ENCODE measurements at regions of chr1 and their contacts with region 1.

Region 1: GRCh38 chr1:6554031-6554906 is at the start of gene NOL9:
- DNase-seq: peak; percentile 95
- H3K4me3 ChIP-seq: peak within 1 kb of the TSS; percentile 99
- H3K27ac ChIP-seq: peak within 1 kb of the TSS; percentile 56
- H3K4me1 ChIP-seq: peaks cover 18% of the 10 kb centered on the region
- CTCF ChIP-seq: peak; percentile 91
- total RNA-seq, gene NOL9: 30.7 and 39.1 TPM in 2 replicates

Region 2: DNA sequence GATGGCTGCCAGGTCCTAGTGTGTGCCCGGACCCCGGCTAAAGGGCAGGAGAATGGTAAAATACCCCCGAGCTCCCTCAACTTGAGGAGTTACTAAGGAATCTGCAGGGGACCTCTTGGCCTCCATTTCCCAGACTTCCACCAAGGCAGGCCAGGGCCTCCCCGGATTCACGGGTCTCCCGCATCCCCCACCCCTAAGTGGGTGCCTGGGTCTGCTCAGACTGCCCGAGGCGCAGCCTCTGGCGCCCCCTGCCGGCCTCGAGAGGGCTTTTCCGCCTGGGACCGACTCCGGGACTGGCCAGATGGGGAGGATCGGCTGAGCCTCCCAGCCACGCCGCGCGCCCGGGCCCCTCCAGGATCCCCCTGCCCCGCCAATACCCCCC is 64.5 kb before region 1 on chr1:
- CTCF ChIA-PET with region 1: no interaction called
- POLR2A ChIA-PET with region 1: interaction called, 4 read pairs
- intact Hi-C with region 1: loop called (anchors 2 kb)
- DNase-seq: peak; percentile 88
- H3K4me3 ChIP-seq: peak overlapping the region; percentile 77
- H3K27ac ChIP-seq: peak overlapping the region; percentile 56
- H3K4me1 ChIP-seq: peaks cover 14% of the 10 kb centered on the region
- CTCF ChIP-seq: peak; percentile 95

Region 3: DNA sequence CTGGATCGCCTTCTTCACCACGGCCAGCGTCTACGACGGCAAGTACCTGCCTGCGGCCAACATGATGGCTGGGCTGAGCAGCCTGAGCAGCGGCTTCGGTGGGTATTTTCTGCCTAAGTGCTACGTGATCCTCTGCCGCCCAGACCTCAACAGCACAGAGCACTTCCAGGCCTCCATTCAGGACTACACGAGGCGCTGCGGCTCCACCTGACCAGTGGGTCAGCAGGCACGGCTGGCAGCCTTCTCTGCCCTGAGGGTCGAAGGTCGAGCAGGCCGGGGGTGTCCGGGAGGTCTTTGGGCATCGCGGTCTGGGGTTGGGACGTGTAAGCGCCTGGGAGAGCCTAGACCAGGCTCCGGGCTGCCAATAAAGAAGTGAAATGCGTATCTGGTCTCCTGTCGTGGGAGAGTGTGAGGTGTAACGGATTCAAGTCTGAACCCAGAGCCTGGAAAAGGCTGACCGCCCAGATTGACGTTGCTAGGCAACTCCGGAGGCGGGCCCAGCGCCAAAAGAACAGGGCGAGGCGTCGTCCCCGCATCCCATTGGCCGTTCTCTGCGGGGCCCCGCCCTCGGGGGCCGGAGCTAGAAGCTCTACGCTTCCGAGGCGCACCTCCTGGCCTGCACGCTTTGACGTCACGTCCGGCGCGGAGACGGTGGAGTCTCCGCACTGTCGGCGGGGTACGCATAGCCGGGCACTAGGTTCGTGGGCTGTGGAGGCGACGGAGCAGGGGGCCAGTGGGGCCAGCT is 25.3 kb after region 1 on chr1 and contains the start of gene ZBTB48:
- CTCF ChIA-PET with region 1: interaction called, 7 read pairs
- POLR2A ChIA-PET with region 1: interaction called, 4 read pairs
- intact Hi-C with region 1: loop called (anchors 1 kb)
- DNase-seq: peak; percentile 98
- H3K4me3 ChIP-seq: peak within 1 kb of the TSS; percentile 86
- H3K27ac ChIP-seq: peak within 1 kb of the TSS; percentile 38
- H3K4me1 ChIP-seq: peaks cover 29% of the 10 kb centered on the region
- CTCF ChIP-seq: no peak
- total RNA-seq, gene ZBTB48: 28.9 and 41.9 TPM in 2 replicates

Region 4: DNA sequence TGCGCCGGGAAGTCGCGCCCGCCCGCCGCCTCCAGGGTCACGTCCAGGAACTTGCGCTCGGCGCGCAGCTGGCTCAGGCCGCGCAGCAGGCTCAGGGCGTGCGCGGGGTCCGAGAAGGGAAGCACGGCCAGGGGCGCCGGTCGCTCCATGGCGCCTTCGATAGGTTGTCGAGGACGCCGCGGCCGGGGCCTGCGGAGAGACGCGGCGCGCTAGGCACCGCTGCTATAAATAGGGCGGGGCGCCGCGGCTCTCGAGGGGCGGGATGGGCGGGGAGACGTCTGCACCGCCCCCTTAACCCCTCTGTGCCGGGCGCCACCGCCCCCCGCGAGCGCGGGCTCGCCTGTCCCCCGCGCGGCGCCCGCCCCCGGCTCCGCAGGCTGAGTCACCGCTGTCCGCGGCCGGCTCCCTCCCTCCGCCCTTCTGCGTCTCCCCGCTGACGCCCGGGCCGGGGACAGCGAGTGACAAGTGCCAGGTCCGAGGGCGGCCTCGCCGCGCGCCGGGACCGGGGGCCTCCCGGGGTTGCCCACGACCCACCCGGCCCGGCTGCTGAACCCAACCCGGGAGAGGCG is 48.5 kb after region 1 on chr1 and contains the start of gene KLHL21:
- CTCF ChIA-PET with region 1: no interaction called
- POLR2A ChIA-PET with region 1: no interaction called
- intact Hi-C with region 1: loop called (anchors 2 kb)
- DNase-seq: peak; percentile 75
- H3K4me3 ChIP-seq: peak within 1 kb of the TSS; percentile 71
- H3K27ac ChIP-seq: no peak within 1 kb of the TSS
- H3K4me1 ChIP-seq: peaks cover 35% of the 10 kb centered on the region
- CTCF ChIP-seq: no peak
- total RNA-seq, gene KLHL21: 7.2 and 7.4 TPM in 2 replicates

Region 5: GRCh38 chr1:6613361-6614018 is 59.2 kb after region 1 on chr1 and contains the start of gene PHF13:
- CTCF ChIA-PET with region 1: no interaction called
- POLR2A ChIA-PET with region 1: no interaction called
- intact Hi-C with region 1: loop called (anchors 1 kb)
- DNase-seq: peak; percentile 99
- H3K4me3 ChIP-seq: peak within 1 kb of the TSS; percentile 94
- H3K27ac ChIP-seq: peak within 1 kb of the TSS; percentile 20
- H3K4me1 ChIP-seq: peaks cover 17% of the 10 kb centered on the region
- CTCF ChIP-seq: no peak
- total RNA-seq, gene PHF13: 5.3 and 7.9 TPM in 2 replicates

Region 6: DNA sequence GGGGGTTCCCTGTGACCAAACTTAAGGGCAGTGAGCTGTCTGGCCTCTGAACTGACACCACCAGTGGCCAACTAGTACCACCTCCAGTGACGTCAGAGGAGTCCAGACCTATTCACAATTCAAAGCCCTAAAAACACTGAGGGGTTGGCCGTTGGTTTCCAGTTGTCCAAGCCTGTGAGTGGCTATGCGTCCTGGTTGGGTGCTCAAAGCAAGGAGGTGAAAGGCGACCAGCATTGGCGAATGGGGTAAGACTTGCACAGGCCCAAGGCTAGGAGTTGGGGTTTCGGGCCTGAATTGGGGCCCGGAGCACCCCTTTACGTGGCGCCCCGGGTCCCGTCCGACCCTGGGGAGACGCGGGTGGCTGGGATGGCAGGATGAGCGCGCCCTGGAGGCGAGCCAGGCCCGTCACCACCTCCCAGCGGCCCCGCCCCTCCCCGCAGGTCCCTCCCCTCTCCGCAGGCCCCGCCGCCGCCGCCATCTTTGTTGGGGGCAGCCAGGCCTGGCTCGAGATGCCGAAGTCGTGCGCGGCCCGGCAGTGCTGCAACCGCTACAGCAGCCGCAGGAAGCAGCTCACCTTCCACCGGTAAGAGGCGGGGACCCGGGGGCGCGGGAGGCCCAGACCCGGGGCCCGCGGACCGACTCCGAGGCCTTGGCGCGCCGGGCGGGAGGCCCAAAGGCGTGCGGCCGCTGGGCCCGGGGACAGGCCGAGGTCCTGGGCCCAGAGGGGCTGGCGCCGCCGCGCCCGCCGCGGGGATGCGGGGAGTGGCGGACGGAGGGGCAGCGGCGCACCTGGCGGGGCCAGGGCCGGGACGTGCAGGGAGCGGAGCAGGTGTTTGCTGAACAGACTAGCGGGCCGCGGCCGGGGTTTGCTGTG is 70.7 kb after region 1 on chr1 and contains the start of gene THAP3:
- CTCF ChIA-PET with region 1: no interaction called
- POLR2A ChIA-PET with region 1: no interaction called
- intact Hi-C with region 1: loop called (anchors 5 kb)
- DNase-seq: peak; percentile 86
- H3K4me3 ChIP-seq: peak within 1 kb of the TSS; percentile 94
- H3K27ac ChIP-seq: peak within 1 kb of the TSS; percentile 29
- H3K4me1 ChIP-seq: peaks cover 24% of the 10 kb centered on the region
- CTCF ChIP-seq: peak; percentile 67
- total RNA-seq, gene THAP3: 22.4 and 24.9 TPM in 2 replicates

Measured in OCI-LY7 (cell line).